Gastrocnemius medialis (tissue), 4 donors: ENCODE measurements at regions of chr9 and their contacts with region 1.

Region 1: GRCh38 chr9:36676778-36677485 is 104.2 kb downstream of the MELK start:
- DNase-seq: no peak
- ATAC-seq: no peak
- H3K4me3 ChIP-seq: no peak overlapping the region
- H3K27ac ChIP-seq: no peak overlapping the region
- H3K4me1 ChIP-seq: no peaks in the 10 kb centered on the region
- H3K27me3 ChIP-seq: no peaks in the 10 kb centered on the region
- CTCF ChIP-seq: no peak
- POLR2A ChIP-seq: no peak

Region 2: DNA sequence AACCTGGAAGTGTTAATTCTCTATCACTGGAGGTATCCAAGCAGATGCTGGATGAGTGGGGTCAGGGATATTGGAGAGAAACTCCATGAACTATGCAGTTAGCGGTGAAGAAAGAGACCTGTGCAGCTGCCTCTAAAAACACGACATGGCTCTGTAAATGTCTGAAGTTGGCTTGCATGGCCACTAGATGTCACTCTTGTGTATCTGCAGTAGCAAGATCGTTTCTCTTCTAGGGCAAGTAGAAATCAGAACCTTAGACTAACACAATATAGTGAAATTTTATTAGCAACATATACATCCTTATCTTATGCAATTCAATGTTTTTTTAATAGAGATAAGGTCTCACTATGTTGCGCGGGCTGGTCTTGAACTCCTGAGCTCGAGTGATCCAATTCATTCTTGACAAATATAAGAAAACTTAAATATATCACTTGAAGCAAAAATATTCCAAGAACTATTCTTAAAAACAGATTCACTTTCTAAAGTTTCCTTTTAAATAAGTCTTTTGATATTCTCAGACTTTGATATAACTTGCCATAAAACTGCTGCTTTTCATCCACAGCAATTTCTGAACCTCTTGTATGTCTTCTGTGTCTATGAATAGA is 721.9 kb before region 1 on chr9:
- in situ Hi-C with region 1: no loop called
- intact Hi-C with region 1: no loop called
- DNase-seq: peak in 1 of 2 donors; percentile 42
- ATAC-seq: peak; percentile 85 to 87
- H3K4me3 ChIP-seq: no peak overlapping the region
- H3K27ac ChIP-seq: no peak overlapping the region
- H3K4me1 ChIP-seq: no peaks in the 10 kb centered on the region
- H3K27me3 ChIP-seq: no peaks in the 10 kb centered on the region
- CTCF ChIP-seq: peak; percentile 66 to 86 (median 70)
- POLR2A ChIP-seq: no peak

Region 3: GRCh38 chr9:36597412-36598178 is 79.3 kb before region 1 on chr9:
- in situ Hi-C with region 1: loop called in 1 of 4 experiments (anchors 25 kb)
- intact Hi-C with region 1: no loop called
- DNase-seq: no peak
- ATAC-seq: no peak
- H3K4me3 ChIP-seq: no peak overlapping the region
- H3K27ac ChIP-seq: no peak overlapping the region
- H3K4me1 ChIP-seq: no peaks in the 10 kb centered on the region
- H3K27me3 ChIP-seq: no peaks in the 10 kb centered on the region
- CTCF ChIP-seq: no peak
- POLR2A ChIP-seq: no peak

Region 4: DNA sequence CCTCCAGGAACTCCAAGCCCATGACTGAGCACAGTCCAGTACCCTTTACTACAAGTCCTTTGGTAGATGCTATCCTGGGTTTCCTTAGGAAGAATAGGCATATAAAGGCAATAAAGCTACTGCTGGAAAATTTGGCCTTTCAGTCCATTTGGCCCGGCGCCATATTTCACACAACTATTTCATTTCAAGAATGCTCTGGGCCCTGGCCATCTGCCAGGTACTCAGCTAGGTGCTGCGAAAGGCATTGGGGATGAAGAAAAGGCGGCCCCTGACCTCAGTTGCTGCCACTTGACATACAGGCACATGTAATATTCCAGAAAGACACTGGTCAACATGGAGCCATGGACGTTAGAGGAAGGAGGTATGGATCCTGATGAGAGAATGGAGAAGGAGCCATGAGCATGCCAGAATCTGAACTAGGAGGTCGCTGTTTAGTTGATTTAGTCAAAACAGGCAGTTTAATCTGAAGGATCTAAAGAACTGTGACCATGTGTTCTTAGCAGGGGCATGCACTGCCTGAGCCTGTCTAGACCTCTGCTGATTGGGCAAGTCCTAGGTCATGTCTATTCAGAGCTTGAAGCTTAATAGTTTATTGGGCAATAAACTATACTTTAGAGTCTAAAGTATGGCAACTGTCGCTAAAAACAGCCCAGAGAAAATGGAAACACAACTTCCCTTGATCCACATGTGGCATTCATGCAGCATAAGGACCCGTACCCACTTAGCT is 45.1 kb after region 1 on chr9:
- in situ Hi-C with region 1: no loop called
- intact Hi-C with region 1: no loop called
- DNase-seq: no peak
- ATAC-seq: no peak
- H3K4me3 ChIP-seq: no peak overlapping the region
- H3K27ac ChIP-seq: no peak overlapping the region
- H3K4me1 ChIP-seq: no peaks in the 10 kb centered on the region
- H3K27me3 ChIP-seq: no peaks in the 10 kb centered on the region
- CTCF ChIP-seq: no peak
- POLR2A ChIP-seq: no peak

Region 5: DNA sequence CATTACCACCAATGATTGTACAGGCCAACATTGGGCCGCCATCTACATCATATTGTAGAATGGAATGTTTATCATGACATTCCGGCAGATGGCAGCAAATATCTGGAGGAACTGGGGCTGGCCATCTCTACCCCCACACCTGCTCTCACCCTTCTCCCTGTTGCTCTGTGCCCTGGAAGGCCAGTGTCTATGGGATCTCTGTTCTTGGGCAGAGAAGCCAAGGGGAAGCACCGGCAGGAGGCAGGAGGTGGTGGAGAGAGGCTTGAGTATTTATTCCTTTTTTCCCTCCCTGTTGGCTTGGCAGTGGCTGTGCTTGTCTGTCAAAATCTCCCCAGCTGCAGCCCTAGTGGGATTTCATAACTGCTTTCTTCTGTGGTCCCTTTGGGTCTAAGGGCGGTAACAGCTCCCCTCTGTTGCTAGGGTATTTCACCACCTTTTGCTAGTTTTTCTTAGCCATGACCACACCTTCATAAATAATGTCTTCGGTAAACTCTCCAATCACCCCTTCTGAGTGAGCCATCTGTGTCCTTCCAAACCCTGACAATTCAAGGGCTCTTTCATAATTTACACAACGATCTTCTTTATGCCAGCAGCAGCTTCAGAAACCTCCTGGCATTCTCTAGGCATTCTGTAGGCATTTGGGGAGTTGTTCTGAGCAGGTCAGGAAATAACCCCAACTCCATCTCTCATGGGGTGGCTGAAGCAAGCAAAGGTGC is 121.6 kb after region 1 on chr9:
- in situ Hi-C with region 1: loop called in 1 of 4 experiments (anchors 25 kb)
- intact Hi-C with region 1: no loop called
- DNase-seq: no peak
- ATAC-seq: no peak
- H3K4me3 ChIP-seq: no peak overlapping the region
- H3K27ac ChIP-seq: no peak overlapping the region
- H3K4me1 ChIP-seq: no peaks in the 10 kb centered on the region
- H3K27me3 ChIP-seq: peaks cover 0 to under 1% (median 0%) of the 10 kb centered on the region in 3 donors
- CTCF ChIP-seq: no peak
- POLR2A ChIP-seq: no peak